ENCODE measurements at regions of chr13 and their contacts with region 1.

Region 1: GRCh38 chr13:50081679-50082425 is 66.6 kb downstream of the KCNRG start:
- DNase-seq: peak; percentile 97
- H3K4me3 ChIP-seq: peak overlapping the region; percentile 94
- H3K27ac ChIP-seq: peak overlapping the region; percentile 79
- H3K27me3 ChIP-seq: no peaks in the 10 kb centered on the region
- CTCF ChIP-seq: peak; percentile 24; the same call in 1 of the 2 replicates

Region 2: DNA sequence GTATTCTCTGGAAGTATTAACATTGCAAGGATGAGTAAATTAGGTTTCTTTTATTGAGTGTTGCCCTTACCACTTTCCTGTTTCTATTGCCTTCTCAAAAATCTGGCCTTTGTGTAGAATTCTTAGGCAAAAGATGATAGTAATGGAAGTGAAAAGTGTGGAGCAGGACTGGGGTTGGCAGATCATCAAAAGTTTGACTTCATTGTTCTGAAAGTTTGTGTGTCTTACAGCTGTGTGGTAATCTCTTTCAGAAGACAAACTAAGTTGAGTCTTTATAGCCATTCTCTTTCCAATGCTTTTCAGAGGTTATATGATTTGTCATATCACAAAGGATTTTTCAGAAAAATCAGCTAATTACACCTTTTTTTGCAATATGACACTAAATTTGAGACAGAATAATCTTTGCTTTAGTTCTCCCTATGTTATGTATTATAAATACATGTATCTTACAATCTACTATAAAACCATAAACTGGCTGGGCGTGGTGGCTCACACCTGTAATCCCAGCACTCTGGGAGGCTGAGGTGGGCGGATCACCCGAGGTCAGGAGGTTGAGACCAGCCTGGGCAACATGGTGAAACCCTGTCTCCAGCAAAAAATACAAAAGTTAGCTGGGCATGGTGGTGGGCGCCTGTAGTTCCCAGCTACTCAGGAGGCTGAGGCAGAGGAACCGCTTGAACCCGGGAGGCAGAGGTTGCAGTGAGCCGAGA is 75.3 kb before region 1 on chr13:
- CTCF ChIA-PET with region 1: no interaction called
- POLR2A ChIA-PET with region 1: no interaction called
- DNase-seq: no peak
- H3K4me3 ChIP-seq: no peak overlapping the region
- H3K27ac ChIP-seq: no peak overlapping the region
- H3K27me3 ChIP-seq: no peaks in the 10 kb centered on the region
- CTCF ChIP-seq: no peak

Region 3: DNA sequence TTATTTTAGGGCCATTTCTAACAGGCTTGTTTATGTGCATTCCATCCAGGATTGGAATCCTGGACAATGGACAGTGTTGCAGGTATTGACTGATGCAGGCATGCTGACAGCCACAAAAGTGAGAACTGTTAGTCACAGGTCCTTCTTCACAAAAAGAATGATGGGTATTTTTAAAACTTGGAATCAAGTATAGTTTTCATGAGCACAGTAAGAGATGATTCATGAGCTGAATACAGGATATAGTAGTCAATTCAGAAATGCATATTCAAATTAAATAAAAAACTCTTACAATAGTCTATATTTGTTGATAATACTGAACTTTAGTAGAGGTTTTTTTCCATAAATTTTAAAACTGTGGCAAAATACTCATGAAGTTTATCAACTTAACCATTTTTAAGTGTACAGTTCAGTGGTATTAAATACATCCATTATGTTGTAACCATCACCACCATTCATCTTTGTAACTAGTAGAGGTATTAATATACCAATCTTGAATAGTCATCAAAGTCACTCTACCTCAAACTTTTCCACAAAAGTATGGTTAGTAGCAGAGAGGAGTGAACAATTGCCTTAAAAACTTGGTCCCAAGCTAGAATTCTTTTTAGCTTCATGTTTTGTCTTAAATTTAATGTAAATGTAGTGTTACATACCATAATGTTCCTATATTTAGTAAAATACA is 12.9 kb after region 1 on chr13:
- CTCF ChIA-PET with region 1: interaction called, 15 read pairs
- POLR2A ChIA-PET with region 1: no interaction called
- DNase-seq: no peak
- H3K4me3 ChIP-seq: no peak overlapping the region
- H3K27ac ChIP-seq: no peak overlapping the region
- H3K27me3 ChIP-seq: no peaks in the 10 kb centered on the region
- CTCF ChIP-seq: no peak

Region 4: GRCh38 chr13:50116430-50116973 is 34.6 kb after region 1 on chr13:
- CTCF ChIA-PET with region 1: interaction called, 12 read pairs
- POLR2A ChIA-PET with region 1: interaction called, 3 read pairs
- DNase-seq: no peak
- H3K4me3 ChIP-seq: no peak overlapping the region
- H3K27ac ChIP-seq: no peak overlapping the region
- H3K27me3 ChIP-seq: no peaks in the 10 kb centered on the region
- CTCF ChIP-seq: no peak

Region 5: GRCh38 chr13:50170447-50171037 is 88.7 kb after region 1 on chr13:
- CTCF ChIA-PET with region 1: no interaction called
- POLR2A ChIA-PET with region 1: no interaction called
- DNase-seq: no peak
- H3K4me3 ChIP-seq: no peak overlapping the region
- H3K27ac ChIP-seq: no peak overlapping the region
- H3K27me3 ChIP-seq: no peaks in the 10 kb centered on the region
- CTCF ChIP-seq: peak; percentile 46

Region 6: DNA sequence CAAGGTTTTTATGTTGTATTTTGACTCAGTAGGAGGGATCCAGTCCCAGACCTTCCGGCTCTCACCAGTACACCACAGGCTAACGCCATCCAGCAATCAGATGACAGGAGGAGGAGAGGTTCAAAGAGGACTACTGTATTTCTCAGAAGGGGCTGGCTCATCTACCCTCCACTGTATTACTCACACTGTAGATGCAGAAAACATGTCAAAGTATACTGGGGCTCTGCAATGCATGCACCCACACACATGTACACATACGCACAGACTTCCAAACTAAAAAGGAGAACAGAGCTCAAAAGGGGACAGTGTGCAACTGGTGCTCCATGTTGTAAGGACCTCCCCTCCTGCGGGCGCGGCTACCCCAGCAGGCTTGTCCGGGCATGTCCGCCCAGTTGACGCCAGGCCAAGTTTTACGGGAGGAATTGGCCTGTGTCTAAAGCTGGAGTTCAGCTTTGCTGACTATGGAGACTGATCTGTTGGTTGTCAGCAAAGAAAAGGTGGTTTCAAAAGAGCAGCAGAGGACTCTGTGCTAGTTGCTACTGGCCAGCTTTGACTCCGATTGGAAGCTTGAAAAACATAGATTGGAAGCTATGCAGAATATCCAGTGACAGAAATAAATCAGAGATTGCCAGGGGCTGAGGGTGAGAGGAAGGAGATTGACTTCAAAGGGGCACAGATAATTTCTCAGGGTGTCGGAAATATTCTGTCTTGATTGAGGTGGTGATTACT is 447.5 kb after region 1 on chr13:
- CTCF ChIA-PET with region 1: interaction called, 29 read pairs
- POLR2A ChIA-PET with region 1: interaction called, 4 read pairs
- DNase-seq: peak; percentile 72
- H3K4me3 ChIP-seq: peak overlapping the region; percentile 39
- H3K27ac ChIP-seq: peak overlapping the region; percentile 94
- H3K27me3 ChIP-seq: no peaks in the 10 kb centered on the region
- CTCF ChIP-seq: no peak

Region 7: DNA sequence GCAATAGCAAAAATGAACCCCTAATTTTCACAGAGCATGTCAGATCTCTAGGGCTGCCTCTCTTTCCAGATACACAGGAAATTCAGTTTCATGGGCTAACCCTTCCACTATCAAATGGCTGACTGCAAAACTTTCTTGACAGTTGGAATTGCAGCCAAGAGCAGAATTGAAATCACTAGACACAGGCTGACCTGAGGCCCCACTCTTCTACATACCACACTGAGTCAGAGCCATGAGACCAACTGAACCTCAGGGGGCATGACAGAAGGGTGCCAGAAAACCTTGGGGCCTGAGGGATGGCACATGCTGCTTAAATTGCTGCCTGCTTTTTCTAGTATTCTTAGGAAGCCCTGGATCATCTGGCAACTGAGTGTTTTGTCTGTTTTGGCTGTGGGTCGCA is 763.4 kb after region 1 on chr13:
- CTCF ChIA-PET with region 1: interaction called, 15 read pairs
- POLR2A ChIA-PET with region 1: no interaction called
- DNase-seq: no peak
- H3K4me3 ChIP-seq: no peak overlapping the region
- H3K27ac ChIP-seq: no peak overlapping the region
- H3K27me3 ChIP-seq: peaks cover 26% of the 10 kb centered on the region
- CTCF ChIP-seq: no peak